ENCODE measurements at regions of chr1 and their contacts with region 1.

Region 1: DNA sequence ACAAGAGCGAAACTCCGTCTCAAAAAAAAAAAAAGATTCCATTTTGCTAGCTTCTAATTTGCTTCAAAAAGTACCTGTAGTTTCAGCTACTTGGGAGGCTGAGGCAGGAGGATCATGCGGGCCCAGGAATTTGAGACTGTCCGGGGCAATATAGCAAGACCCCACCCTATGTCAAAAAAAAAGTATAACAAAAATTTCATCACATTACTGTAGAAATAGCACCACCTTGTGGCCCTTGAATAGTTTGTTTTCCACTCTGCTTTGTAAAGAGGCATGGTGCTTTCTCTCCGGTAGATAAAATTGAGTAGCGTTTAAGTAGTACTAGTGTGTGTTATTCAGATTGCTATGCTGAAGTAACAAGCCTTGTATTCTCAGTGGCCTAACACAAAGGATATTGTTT is 18.2 kb upstream of the MSTO1 start:
- DNase-seq: no peak
- H3K4me3 ChIP-seq: no peak overlapping the region
- H3K27ac ChIP-seq: no peak overlapping the region
- H3K4me1 ChIP-seq: no peaks in the 10 kb centered on the region
- H3K27me3 ChIP-seq: no peaks in the 10 kb centered on the region
- CTCF ChIP-seq: peak in 1 of 3 experiments; percentile 38
- POLR2A ChIP-seq: no peak

Region 2: DNA sequence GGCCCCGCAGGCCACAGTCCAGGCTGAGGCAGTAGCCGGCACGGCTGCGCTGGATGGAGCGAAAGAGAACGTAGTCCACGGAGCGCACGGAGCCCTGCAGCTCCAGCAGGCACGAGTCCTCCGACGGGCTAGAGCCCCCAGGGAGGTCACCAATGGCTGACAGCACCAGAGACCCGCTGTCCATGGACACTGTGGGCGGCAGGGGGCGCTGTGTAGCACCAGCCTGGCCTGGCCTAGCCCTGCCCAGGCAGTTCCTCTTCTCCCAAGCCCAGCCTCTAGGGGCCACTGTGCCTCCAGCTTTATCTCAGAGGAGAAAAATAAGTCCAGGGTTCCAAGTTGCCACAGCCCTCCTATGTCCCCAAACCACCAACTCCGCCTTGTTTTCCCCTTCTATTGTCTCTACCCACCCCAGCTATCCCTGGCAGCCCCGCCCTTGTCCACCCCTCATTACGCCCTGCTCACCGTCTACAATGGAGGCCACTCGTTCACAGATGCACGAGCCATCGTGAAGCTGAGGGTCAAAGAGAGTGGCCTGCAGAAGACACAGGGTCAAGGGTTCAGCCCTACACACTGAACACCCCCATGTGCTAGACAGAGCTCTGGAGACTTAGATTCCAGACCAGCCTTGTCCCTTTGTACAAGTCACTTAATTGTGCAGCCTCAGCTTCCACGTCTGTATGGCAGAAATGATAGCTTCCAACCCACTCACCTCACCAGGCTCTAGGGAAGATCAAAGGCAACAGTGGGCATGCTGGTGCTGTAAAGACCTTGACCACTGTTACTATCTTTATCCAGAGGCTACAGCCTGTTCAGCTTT is 340.9 kb before region 1 on chr1:
- intact Hi-C with region 1: loop called (anchors 5 kb)
- DNase-seq: no peak
- H3K4me3 ChIP-seq: no peak overlapping the region
- H3K27ac ChIP-seq: peak overlapping the region; percentile 26
- H3K4me1 ChIP-seq: peaks cover 24% of the 10 kb centered on the region
- H3K27me3 ChIP-seq: no peaks in the 10 kb centered on the region
- CTCF ChIP-seq: peak; percentile 99
- POLR2A ChIP-seq: no peak

Measured in vagina (tissue), 2 donors.